GM12878 (cell line): ENCODE measurements at regions of chr2 and their contacts with region 1.

Region 1: GRCh38 chr2:187499941-187500532 is 52.0 kb upstream of the CALCRL start:
- DNase-seq: no peak
- ATAC-seq: peak; percentile 94
- H3K4me3 ChIP-seq: no peak overlapping the region
- H3K27ac ChIP-seq: no peak overlapping the region
- H3K4me1 ChIP-seq: no peaks in the 10 kb centered on the region
- H3K27me3 ChIP-seq: no peaks in the 10 kb centered on the region
- CTCF ChIP-seq: peak; percentile 61 to 92 (median 63); a peak in 5 of 6 replicates
- EP300 ChIP-seq: no peak
- POLR2A ChIP-seq: no peak
- RAD21 ChIP-seq: peak; percentile 99

Region 2: DNA sequence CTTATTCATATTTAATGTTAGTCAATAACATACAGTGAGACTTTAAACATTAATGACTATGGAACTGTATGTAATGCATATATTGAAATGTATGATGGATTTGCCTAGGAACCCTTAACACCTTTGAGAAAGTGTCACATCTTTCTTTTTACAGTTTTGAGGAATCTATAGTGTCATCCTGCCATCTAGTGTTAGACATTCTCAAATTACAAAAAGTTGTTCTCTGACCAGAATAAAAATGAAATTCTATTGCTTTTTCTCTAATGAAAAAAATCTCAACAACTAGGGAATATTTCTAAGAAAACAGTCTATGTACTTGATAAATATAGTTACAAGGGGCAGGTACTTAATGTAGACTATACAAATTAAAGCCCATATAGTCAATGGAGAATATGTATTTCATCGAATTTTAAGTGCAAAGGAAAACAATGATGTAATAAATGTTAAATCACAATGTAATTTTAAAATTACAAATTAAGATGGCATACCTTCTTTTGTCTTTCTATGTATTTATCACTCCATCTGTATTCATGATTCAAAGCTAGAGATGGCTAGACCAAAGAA is 46.9 kb before region 1 on chr2:
- CTCF ChIA-PET with region 1: interaction called, 10 read pairs
- POLR2A ChIA-PET with region 1: no interaction called
- RAD21 ChIA-PET with region 1: interaction called, 7 read pairs
- SMC1A ChIA-PET with region 1: interaction called, 11 read pairs
- in situ Hi-C with region 1: no loop called
- intact Hi-C with region 1: no loop called
- DNase-seq: no peak
- ATAC-seq: 0 out of 3 replicates have a peak, but pooled peaks have one; percentile 11
- H3K4me3 ChIP-seq: no peak overlapping the region
- H3K27ac ChIP-seq: no peak overlapping the region
- H3K4me1 ChIP-seq: no peaks in the 10 kb centered on the region
- H3K27me3 ChIP-seq: no peaks in the 10 kb centered on the region
- CTCF ChIP-seq: peak; percentile 8 to 67 (median 27); a peak in 4 of 6 replicates
- EP300 ChIP-seq: no peak
- POLR2A ChIP-seq: no peak
- RAD21 ChIP-seq: peak; percentile 81

Region 3: DNA sequence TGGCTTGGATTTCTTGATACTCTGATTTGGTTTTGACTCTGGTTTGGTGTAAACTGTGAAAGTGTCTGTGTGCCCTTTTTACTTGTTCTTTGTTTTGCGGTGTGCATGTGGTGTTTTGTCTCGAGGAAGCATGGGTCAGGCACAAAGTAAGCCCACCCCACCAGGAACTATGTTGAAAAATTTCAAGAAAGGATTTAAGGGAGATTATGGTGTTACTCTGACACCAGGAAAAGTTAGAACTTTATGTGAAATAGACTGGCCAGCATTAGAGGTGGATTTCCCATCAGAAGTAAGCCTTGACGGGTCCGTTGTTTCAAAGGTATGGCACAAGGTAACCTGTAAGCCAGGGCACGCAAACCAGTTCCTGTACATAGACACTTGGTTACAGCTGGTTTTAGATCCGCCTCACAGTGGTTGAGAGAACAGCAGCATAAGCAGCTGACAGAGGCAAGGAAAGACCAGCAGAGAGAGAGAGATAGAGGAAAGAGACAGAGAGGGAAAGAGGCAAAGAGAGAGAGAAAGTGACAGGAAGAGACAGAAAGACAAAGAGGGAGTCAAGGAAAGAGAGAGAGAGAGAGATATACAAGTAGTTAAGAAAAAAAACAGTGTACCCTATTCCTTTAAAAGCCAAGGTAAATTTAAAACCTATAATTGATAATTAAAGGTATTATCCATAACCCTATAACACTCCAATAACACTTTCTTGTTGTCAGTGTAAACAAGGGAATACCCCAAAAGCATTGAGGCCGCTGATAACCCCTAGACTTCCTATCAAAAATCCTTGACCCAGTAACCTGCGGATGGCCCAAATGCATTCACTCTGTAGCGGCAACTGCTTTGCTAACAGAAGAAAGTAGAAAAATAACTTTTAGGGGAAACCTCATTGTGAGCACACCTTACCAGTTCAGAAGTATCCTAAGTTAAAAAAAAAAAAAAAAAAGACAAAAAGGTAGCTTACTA is 11.6 kb after region 1 on chr2:
- CTCF ChIA-PET with region 1: interaction called, 14 read pairs
- POLR2A ChIA-PET with region 1: no interaction called
- RAD21 ChIA-PET with region 1: interaction called, 5 read pairs
- SMC1A ChIA-PET with region 1: interaction called, 10 read pairs
- in situ Hi-C with region 1: no loop called
- intact Hi-C with region 1: no loop called
- DNase-seq: no peak
- ATAC-seq: no peak
- H3K4me3 ChIP-seq: no peak overlapping the region
- H3K27ac ChIP-seq: no peak overlapping the region
- H3K4me1 ChIP-seq: no peaks in the 10 kb centered on the region
- H3K27me3 ChIP-seq: no peaks in the 10 kb centered on the region
- CTCF ChIP-seq: no peak
- EP300 ChIP-seq: no peak
- POLR2A ChIP-seq: no peak
- RAD21 ChIP-seq: no peak

Region 4: DNA sequence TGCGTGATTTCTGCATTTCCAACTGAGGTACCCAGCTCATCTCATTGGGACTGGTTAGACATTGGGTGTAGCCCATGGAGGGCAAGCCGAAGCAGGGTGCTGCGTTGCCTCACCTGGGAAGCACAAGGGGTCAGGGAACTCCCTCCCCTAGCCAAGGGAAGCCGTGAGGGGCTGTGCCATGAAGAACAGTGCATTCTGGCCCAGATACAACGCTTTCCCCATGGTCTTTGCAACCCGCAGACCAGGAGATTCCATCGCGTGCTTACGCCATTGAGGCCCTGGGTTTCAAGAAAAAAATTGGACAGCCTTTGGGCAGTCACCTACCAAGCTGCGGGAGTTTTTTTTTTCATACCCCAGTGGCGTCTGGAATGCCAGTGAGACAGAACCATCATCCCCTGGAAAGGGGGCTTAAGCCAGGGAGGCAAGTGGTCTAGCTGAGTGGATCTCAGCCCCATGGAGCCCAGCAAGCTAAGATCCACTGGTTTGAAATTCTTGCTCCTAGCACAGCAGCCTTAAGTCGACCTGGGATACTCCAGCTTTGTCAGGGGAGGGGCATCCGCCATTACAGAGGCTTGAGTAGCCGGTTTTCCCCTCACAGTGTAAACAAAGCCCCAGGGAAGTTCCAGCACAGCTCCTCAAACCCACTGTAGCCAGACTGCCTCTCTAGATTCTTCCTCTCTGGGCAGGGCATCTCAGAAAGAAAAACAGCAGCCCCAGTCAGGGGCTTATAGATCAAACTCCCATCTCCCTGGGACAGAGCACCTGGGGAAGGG is 32.5 kb after region 1 on chr2:
- CTCF ChIA-PET with region 1: interaction called, 18 read pairs
- POLR2A ChIA-PET with region 1: no interaction called
- RAD21 ChIA-PET with region 1: no interaction called
- SMC1A ChIA-PET with region 1: interaction called, 6 read pairs
- in situ Hi-C with region 1: no loop called
- intact Hi-C with region 1: no loop called
- DNase-seq: no peak
- ATAC-seq: peak; percentile 81
- H3K4me3 ChIP-seq: no peak overlapping the region
- H3K27ac ChIP-seq: no peak overlapping the region
- H3K4me1 ChIP-seq: no peaks in the 10 kb centered on the region
- H3K27me3 ChIP-seq: no peaks in the 10 kb centered on the region; a peak in 1 of 4 replicates
- CTCF ChIP-seq: no peak
- EP300 ChIP-seq: no peak
- POLR2A ChIP-seq: no peak
- RAD21 ChIP-seq: no peak

Region 5: DNA sequence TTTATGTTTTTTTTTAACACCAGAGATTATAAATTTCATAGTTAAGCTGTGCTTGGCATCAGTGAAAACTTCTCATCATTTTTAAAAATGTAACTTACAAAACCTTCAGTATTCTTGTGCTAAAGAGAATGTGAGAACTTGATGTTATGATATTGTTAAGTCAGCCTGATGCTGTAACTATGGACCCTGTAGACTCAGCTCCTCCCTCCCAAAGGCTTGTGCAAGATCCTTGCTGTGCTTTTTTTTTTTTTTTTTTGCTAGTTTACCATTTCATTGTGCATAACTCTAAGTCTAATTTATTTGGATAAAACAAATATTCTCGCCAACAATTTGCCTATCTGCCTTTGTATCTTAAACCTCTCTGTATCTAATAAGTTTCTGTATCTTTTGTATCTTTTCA is 67.1 kb after region 1 on chr2:
- CTCF ChIA-PET with region 1: interaction called, 50 read pairs
- POLR2A ChIA-PET with region 1: no interaction called
- RAD21 ChIA-PET with region 1: interaction called, 9 read pairs
- SMC1A ChIA-PET with region 1: interaction called, 9 read pairs
- in situ Hi-C with region 1: no loop called
- intact Hi-C with region 1: no loop called
- DNase-seq: no peak
- ATAC-seq: no peak
- H3K4me3 ChIP-seq: no peak overlapping the region
- H3K27ac ChIP-seq: no peak overlapping the region
- H3K4me1 ChIP-seq: no peaks in the 10 kb centered on the region
- H3K27me3 ChIP-seq: no peaks in the 10 kb centered on the region
- CTCF ChIP-seq: no peak
- EP300 ChIP-seq: no peak
- POLR2A ChIP-seq: no peak
- RAD21 ChIP-seq: no peak

Region 6: DNA sequence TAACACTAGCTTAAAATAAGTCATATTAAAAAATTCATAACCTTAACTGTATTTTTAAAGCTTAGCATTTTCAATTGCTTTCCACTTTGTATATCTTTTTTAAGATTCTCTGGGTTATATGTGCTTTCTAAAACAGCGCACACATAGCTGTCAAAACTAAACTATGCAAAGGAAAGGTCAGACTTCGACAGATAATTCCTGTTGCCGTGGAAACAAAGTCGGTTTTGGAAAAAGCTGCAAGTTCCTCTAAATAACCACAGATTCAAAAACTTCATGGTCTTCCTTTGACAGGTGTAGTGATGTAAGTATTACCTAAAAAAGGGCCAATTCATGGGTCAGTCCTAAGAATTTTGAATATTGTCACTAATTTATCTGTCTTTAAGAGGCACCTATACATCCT is 303.8 kb after region 1 on chr2:
- CTCF ChIA-PET with region 1: no interaction called
- POLR2A ChIA-PET with region 1: no interaction called
- RAD21 ChIA-PET with region 1: no interaction called
- SMC1A ChIA-PET with region 1: no interaction called
- in situ Hi-C with region 1: no loop called
- intact Hi-C with region 1: no loop called
- DNase-seq: no peak
- ATAC-seq: no peak
- H3K4me3 ChIP-seq: no peak overlapping the region
- H3K27ac ChIP-seq: no peak overlapping the region
- H3K4me1 ChIP-seq: no peaks in the 10 kb centered on the region
- H3K27me3 ChIP-seq: no peaks in the 10 kb centered on the region
- CTCF ChIP-seq: no peak
- EP300 ChIP-seq: no peak
- POLR2A ChIP-seq: no peak
- RAD21 ChIP-seq: no peak

Region 7: GRCh38 chr2:187842978-187843847 is 343.2 kb after region 1 on chr2:
- CTCF ChIA-PET with region 1: interaction called, 99 read pairs
- POLR2A ChIA-PET with region 1: no interaction called
- RAD21 ChIA-PET with region 1: interaction called, 54 read pairs
- SMC1A ChIA-PET with region 1: interaction called, 52 read pairs
- in situ Hi-C with region 1: loop called (anchors 5 kb)
- intact Hi-C with region 1: loop called (anchors 1 kb)
- DNase-seq: no peak
- ATAC-seq: peak; percentile 79
- H3K4me3 ChIP-seq: no peak overlapping the region
- H3K27ac ChIP-seq: no peak overlapping the region
- H3K4me1 ChIP-seq: no peaks in the 10 kb centered on the region
- H3K27me3 ChIP-seq: no peaks in the 10 kb centered on the region
- CTCF ChIP-seq: peak; percentile 48 to 64 (median 51); a peak in 5 of 6 replicates
- EP300 ChIP-seq: no peak
- POLR2A ChIP-seq: no peak
- RAD21 ChIP-seq: peak; percentile 64

Region 8: DNA sequence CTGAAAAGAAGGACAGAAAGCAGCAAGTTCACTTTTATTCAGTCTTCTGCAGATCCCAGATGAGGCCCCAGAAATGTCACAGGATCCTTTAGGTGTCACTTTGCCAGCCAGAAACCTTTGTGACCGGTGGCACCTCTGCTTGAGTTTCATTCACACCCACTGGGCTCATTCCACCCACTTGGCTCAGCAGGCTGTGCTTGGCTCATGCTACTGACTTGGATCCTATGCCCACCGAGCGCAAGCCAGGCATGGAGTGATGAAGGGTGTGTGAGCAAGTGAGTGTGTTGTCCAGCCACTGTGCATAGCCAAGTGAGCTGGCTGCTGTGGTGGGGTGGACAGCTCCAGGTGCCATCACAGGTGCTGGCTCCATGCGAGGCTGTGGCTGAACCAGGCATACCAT is 434.7 kb after region 1 on chr2:
- CTCF ChIA-PET with region 1: no interaction called
- POLR2A ChIA-PET with region 1: no interaction called
- RAD21 ChIA-PET with region 1: no interaction called
- SMC1A ChIA-PET with region 1: no interaction called
- in situ Hi-C with region 1: no loop called
- intact Hi-C with region 1: no loop called
- DNase-seq: no peak
- ATAC-seq: no peak
- H3K4me3 ChIP-seq: no peak overlapping the region
- H3K27ac ChIP-seq: no peak overlapping the region
- H3K4me1 ChIP-seq: no peaks in the 10 kb centered on the region
- H3K27me3 ChIP-seq: no peaks in the 10 kb centered on the region; a peak in 1 of 4 replicates
- CTCF ChIP-seq: no peak
- EP300 ChIP-seq: no peak
- POLR2A ChIP-seq: no peak
- RAD21 ChIP-seq: no peak